Spleen (tissue), 13 donors: ENCODE measurements at regions of chr15 and their contacts with region 1.

Region 1: DNA sequence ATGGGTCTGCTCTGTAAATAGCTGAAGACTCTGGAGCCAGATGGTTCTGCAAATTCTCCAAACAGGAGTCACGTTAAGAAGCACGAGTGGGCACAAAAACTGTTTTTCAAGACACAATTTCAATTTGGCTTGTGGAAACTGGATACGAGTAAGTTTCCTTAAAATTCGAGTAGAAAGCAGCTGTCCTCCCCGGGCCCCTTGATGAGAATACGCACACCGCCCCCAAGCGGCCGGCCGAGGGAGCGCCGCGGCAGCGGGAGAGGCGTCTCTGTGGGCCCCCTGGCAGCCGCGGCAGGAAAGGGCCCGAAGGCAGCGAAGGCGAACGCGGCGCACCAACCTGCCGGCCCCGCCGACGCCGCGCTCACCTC is 778 bp upstream of the THBS1 start:
- DNase-seq: peak; percentile 95
- H3K4me3 ChIP-seq: peak overlapping the region; percentile 39 to 70 (median 46)
- H3K27ac ChIP-seq: peak overlapping the region; percentile 51 to 90 (median 83)
- H3K4me1 ChIP-seq: peaks cover 0 to 59% (median 23%) of the 10 kb centered on the region in 6 donors
- H3K27me3 ChIP-seq: peaks cover 0 to 79% (median 15%) of the 10 kb centered on the region in 7 donors
- CTCF ChIP-seq: peak; percentile 47 to 99 (median 96)
- POLR2A ChIP-seq: no peak

Region 2: GRCh38 chr15:38817427-38818156 is 762.5 kb before region 1 on chr15:
- intact Hi-C with region 1: loop called (anchors 10 kb)
- DNase-seq: peak; percentile 93
- H3K4me3 ChIP-seq: peak overlapping the region in 1 of 8 donors; percentile 23
- H3K27ac ChIP-seq: no peak overlapping the region
- H3K4me1 ChIP-seq: peaks cover 0 to 11% (median 7%) of the 10 kb centered on the region in 6 donors
- H3K27me3 ChIP-seq: no peaks in the 10 kb centered on the region
- CTCF ChIP-seq: peak; percentile 82 to 97 (median 92)
- POLR2A ChIP-seq: no peak

Region 3: GRCh38 chr15:39125904-39126303 is 454.2 kb before region 1 on chr15:
- intact Hi-C with region 1: loop called (anchors 10 kb)
- DNase-seq: no peak
- H3K4me3 ChIP-seq: no peak overlapping the region
- H3K27ac ChIP-seq: no peak overlapping the region
- H3K4me1 ChIP-seq: peaks cover 0 to 14% (median 2%) of the 10 kb centered on the region in 6 donors
- H3K27me3 ChIP-seq: no peaks in the 10 kb centered on the region
- CTCF ChIP-seq: peak in 10 of 11 experiments; percentile 7 to 65 (median 46)
- POLR2A ChIP-seq: no peak

Region 4: GRCh38 chr15:39686000-39686613 is 106.0 kb after region 1 on chr15:
- intact Hi-C with region 1: no loop called
- DNase-seq: no peak
- H3K4me3 ChIP-seq: no peak overlapping the region
- H3K27ac ChIP-seq: no peak overlapping the region
- H3K4me1 ChIP-seq: no peaks in the 10 kb centered on the region
- H3K27me3 ChIP-seq: no peaks in the 10 kb centered on the region
- CTCF ChIP-seq: peak in 10 of 11 experiments; percentile 38 to 78 (median 72)
- POLR2A ChIP-seq: no peak

Region 5: DNA sequence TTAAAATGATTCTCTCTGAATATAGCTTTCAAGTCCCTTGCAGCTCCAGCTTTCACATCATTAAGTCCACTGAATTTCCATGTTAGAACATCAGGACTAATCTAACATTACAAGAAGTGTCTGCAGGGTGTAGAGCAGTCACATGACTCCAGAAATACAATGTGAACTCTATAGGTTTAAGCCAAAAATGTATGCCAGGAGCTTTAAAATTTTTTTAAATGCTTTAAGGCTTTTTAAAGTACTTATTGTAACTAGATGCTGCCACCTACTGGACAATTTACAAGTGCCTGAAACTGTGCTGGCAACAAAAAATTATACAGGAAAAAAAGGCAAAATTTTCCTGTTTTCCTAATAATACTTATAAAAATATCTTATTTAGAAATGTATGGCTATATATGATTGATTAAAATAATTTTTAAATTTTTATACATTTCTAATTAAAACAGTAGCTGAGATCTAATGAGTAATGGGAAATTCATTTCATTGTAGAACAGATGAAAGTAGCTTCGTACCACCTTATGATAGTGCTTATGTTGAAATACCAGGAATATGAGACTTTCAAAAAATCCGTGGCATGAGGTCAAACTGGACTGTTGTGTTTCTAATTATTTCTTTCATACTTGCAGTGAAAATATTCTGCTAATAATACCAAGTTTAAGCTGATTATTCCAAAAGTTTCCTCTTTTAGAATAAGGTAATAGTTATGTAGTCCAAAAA is 176.9 kb after region 1 on chr15:
- intact Hi-C with region 1: loop called (anchors 10 kb)
- DNase-seq: no peak
- H3K4me3 ChIP-seq: no peak overlapping the region
- H3K27ac ChIP-seq: no peak overlapping the region
- H3K4me1 ChIP-seq: no peaks in the 10 kb centered on the region
- H3K27me3 ChIP-seq: no peaks in the 10 kb centered on the region
- CTCF ChIP-seq: peak; percentile 25 to 87 (median 72)
- POLR2A ChIP-seq: no peak